ENCODE measurements at regions of chr20 and their contacts with region 1.

Region 1: DNA sequence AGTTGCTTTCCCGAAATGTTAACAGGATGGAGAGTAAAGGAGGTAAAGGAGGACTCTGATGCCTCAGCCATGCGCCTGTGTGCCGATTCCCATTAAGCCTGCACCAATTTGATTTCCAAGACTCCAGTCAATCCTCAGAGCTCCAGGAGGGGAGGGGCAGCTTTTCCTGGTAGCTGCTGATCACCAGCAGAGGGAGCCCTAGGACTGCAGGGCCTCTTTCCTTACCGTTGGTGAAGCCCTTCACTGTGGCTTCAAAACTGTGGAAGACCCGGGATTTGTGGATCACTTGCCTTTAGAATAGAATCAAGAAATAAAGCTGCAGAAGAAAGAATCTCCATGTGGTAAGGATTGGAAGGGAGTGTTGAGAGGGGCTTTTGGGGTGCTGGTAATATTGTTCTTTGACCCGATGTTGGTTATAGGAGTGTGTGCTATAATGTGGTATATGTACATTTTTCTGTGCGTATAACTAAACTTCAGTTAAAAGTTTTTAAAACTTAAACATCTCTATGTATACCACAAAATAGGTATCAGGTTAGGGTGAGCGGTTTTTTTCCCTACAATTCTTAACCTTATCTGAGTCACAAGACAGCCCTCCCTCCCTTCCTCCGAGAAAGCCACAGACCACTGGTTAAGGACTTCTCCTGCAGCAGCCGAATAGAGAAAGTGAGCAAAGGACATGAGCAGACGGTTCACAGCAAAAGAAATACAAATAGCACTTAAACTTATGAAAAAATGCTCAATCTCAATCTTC is 6.9 kb upstream of the OSER1 start:
- DNase-seq: peak; percentile 71
- ATAC-seq: peak; percentile 68 to 77

Region 2: DNA sequence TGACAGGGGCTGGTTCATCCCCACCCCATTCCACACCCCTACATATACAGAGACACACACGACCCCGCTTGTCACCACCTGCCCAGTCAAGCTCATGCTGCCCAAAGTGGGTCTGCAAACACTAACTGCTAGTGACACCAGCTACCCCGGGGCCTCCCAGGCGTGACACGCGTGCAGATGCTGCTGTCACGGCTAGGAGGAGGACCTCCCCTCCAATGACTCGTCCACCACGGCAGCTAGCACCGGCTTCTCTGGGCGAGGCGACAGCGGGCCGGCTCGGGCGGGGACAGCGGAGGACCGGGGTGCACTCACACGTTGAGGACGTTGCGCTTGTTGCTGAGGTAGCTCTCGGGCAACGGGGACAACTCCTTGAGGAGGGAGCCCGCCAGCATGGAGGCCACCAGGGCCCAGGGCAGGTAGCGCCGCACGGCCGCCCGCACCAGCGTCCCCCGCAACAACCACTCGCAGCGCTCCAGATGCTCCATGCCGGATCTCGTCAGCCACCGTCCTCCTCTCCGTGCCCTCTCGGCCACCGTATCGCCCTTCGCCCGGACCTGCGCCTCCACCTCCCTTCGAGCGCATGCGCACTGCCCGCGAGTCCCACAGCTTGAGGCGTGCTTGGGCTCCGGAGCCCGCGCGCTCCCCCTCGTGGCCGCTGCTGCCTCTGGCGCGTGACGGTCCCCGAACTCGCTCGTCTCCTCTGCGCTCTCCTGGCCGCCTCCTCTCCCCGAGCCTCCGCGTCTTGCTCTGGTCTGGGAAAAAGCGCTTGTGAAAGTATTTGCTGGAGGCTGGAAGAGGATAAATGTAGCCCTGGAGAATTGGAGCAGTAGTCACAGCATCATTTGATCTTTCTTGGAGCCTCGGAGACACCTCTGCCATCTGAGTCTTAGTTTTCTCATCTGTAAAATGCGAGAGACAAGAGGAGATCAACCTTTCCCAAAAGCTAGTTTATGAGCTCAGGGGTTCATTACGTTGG is 93.4 kb after region 1 on chr20 and contains the start of gene FITM2:
- intact Hi-C with region 1: loop called (anchors 1 to 5 kb)
- DNase-seq: peak; percentile 99
- ATAC-seq: peak; percentile 91 to 93
- total RNA-seq, gene FITM2: 97.7 to 124 TPM

Region 3: GRCh38 chr20:44475694-44476560 is 258.4 kb after region 1 on chr20 and contains the start of gene TTPAL:
- intact Hi-C with region 1: loop called (anchors 5 to 10 kb)
- DNase-seq: peak; percentile 92
- ATAC-seq: peak; percentile 99
- total RNA-seq, gene TTPAL: 7.2 to 7.6 TPM